Activated T-helper 1 cell treated with anti-CD3 and anti-CD28 coated beads, Interleukin-12 subunit alpha, Interleukin-12 subunit beta, Interleukin-2, Interleukin-4 antibody, amounts not matched to agents 30 ng/mL and 10 ng/mL and 1 ng/mL, durations not matched to agents 14 hours and 24 hours and 36 hours (primary cell): ENCODE measurements at regions of chr2 and their contacts with region 1.

Region 1: DNA sequence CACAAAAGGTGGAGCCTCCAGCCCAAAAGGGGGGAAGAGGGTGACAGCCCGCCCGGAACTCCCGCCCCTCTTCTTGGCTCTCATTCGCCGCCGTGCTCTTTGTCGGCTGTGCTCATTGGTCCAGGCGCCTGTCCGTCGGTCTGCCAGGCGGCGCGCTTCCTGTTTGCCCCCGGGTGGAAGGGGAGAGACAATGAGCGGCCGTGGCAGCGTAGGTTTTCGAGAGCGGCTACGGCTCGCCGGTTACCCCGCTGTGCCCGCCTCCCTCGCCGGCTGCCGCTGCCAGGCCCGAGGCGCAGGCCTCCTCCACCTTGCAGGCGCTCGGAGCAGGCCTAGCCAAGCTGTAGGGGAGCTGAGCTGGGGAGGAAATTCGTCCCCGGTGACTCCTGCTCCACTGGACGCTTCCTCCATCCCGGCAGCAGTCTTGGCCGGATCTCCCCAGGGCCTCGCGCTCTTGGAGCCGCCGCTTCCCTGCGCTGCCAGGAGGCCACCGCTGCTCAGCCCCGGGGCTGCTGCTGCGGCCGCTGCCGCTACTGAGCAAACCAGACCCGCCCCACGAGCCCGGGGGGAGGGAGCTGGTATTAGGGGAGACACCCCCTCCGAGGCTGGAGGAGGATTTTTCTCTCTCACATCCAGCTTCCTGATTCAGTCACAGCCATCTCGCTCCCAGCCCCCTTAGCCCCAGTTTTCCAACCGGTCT is at the start of gene SP3:
- DNase-seq: peak; percentile 94
- H3K4me3 Mint-ChIP-seq: peak within 1 kb of the TSS; percentile 93
- H3K27ac Mint-ChIP-seq: peak within 1 kb of the TSS; percentile 99
- H3K4me1 Mint-ChIP-seq: peaks cover 37% of the 10 kb centered on the region
- H3K27me3 Mint-ChIP-seq: no peaks in the 10 kb centered on the region
- total RNA-seq, gene SP3: 95.8 and 103 TPM in 2 replicates

Region 2: DNA sequence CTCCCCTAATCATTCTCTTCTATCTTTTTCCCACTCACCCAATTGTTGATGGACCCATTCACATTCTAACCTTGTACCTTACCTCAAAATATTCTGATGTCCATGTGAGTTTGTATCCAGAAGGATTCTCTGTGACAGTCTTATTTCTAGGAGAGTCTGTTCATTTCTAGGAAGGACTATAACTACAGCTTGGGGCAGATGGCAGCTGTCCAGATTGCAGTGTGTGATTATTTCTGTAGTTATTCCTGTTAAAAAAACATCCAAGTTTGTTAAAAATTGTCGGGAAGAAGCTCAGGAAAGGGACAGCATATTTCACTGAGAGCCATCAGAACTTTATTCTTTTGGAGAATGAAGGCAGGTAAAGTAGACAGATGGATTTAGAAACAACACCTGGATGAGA is 1087.2 kb before region 1 on chr2:
- intact Hi-C with region 1: no loop called
- DNase-seq: no peak
- H3K4me3 Mint-ChIP-seq: no peak overlapping the region
- H3K27ac Mint-ChIP-seq: no peak overlapping the region
- H3K4me1 Mint-ChIP-seq: no peaks in the 10 kb centered on the region
- H3K27me3 Mint-ChIP-seq: peaks cover 5% of the 10 kb centered on the region

Region 3: DNA sequence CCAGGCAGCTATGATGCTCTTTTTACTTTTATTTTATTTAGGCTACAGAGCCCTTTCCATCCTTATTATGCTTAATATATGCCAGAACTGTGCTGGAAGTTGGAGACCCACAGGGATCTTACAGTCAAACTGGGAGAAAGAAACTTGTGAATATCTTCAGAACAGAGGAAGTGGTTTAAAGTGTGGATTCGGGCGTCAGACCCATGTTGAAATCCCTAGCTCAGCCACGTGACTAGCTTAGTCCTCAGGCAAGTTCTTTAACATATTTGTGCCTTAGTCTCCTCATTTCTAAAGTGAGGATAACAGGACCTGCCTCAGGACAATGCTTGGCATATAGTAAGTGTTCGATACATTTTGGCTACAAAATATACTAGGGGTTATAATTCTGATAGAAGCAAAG is 830.8 kb before region 1 on chr2:
- intact Hi-C with region 1: loop called (anchors 10 kb)
- DNase-seq: no peak
- H3K4me3 Mint-ChIP-seq: peak overlapping the region; percentile 58
- H3K27ac Mint-ChIP-seq: peak overlapping the region; percentile 76
- H3K4me1 Mint-ChIP-seq: peaks cover 76% of the 10 kb centered on the region
- H3K27me3 Mint-ChIP-seq: peaks cover 21% of the 10 kb centered on the region

Region 4: DNA sequence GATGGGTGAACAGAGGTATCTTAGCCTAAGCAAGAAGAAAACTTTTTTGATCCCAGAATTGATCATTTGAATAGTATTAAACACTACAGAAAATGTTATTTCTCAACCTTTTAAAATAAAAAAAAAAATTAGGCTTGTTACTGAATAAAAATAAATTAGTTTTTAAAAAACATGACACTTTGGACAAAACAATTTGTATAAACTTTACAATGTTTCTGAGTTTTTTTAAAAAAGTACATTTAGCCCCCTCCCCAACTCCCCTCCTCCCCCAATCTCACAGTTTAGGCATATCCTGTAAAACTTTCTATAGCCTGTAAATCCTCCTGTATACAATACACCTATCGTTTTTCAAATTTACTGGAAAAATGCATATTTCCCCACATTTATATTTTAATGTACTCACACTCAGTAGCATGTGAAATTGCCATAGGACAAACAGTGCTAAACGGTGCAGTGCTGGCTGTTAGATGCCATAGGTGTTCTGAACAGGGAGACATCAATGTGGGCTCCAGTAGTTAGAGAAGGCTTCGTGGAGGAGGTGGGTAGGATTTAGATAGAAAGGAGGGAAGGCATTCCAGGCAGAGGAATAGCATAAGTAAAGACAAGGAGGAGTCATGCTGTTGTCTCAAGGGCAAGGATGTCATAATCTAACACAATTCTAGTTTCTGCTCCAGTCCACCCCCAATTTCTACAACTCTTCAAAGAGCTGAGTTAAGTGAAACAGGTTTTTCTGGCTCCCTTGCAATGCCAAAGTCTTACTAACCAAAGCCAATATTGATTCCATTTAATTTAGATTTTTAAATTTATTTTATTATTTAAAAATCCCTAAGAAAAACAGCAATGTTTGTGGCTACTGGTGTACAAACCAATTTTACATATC is 51.2 kb before region 1 on chr2:
- intact Hi-C with region 1: no loop called
- DNase-seq: no peak
- H3K4me3 Mint-ChIP-seq: no peak overlapping the region
- H3K27ac Mint-ChIP-seq: no peak overlapping the region
- H3K4me1 Mint-ChIP-seq: peaks cover 38% of the 10 kb centered on the region
- H3K27me3 Mint-ChIP-seq: no peaks in the 10 kb centered on the region

Region 5: GRCh38 chr2:173942861-173943538 is 22.5 kb before region 1 on chr2:
- intact Hi-C with region 1: loop called (anchors 1 kb)
- DNase-seq: no peak
- H3K4me3 Mint-ChIP-seq: no peak overlapping the region
- H3K27ac Mint-ChIP-seq: peak overlapping the region; percentile 61
- H3K4me1 Mint-ChIP-seq: peaks cover 73% of the 10 kb centered on the region
- H3K27me3 Mint-ChIP-seq: no peaks in the 10 kb centered on the region

Region 6: GRCh38 chr2:174039551-174040416 is 74.3 kb after region 1 on chr2:
- intact Hi-C with region 1: loop called (anchors 1 kb)
- DNase-seq: peak; percentile 72
- H3K4me3 Mint-ChIP-seq: peak overlapping the region; percentile 40
- H3K27ac Mint-ChIP-seq: peak overlapping the region; percentile 89
- H3K4me1 Mint-ChIP-seq: peaks cover 16% of the 10 kb centered on the region
- H3K27me3 Mint-ChIP-seq: no peaks in the 10 kb centered on the region

Region 7: GRCh38 chr2:174350018-174350417 is 384.5 kb after region 1 on chr2:
- intact Hi-C with region 1: no loop called
- DNase-seq: no peak
- H3K4me3 Mint-ChIP-seq: no peak overlapping the region
- H3K27ac Mint-ChIP-seq: no peak overlapping the region
- H3K4me1 Mint-ChIP-seq: no peaks in the 10 kb centered on the region
- H3K27me3 Mint-ChIP-seq: peaks cover 6% of the 10 kb centered on the region

Region 8: DNA sequence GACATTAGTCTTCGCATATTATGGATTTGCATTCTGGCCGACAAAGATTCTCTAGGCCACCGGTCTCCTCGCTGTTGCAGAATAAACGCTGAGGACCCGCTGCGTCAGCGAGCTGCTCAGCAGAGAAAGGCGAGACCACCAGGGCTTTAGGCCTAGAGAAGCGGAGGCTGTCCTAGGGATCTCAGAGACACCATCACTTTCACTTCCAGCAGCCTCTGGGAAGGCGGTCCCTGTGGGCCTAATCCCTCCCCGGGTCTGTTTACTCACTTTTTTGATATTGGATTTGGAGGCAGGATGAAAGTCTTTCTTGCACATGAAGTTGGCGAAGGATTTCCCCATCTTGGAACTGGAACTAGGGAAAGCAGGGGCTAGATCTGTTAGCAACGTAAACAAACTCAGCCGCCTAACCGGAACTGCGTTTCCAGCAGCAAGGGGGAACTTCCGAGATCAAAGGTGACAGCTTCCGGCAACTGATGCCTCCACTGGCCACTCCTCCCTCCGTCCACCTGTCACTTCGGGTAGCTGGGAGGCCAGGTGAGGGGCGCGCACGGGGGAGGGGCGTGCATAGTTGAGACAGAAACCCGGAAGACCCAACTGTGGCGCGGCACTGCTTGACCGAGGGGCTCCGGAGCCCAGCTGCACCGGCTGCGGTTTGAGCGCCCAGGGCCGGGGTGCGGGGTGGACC is 429.9 kb after region 1 on chr2 and contains the start of gene SCRN3:
- intact Hi-C with region 1: loop called (anchors 5 kb)
- DNase-seq: peak; percentile 74
- H3K4me3 Mint-ChIP-seq: peak within 1 kb of the TSS; percentile 95
- H3K27ac Mint-ChIP-seq: peak within 1 kb of the TSS; percentile 97
- H3K4me1 Mint-ChIP-seq: peaks cover 44% of the 10 kb centered on the region
- H3K27me3 Mint-ChIP-seq: no peaks in the 10 kb centered on the region
- total RNA-seq, gene SCRN3: 14.0 and 19.8 TPM in 2 replicates